CD8-positive, alpha-beta T cell (primary cell): ENCODE measurements at regions of chr16 and their contacts with region 1.

Region 1: GRCh38 chr16:2223375-2224182 is at the start of gene E4F1:
- DNase-seq: peak; percentile 97 to 100 (median 99)
- ATAC-seq: peak; percentile 96
- H3K4me3 ChIP-seq: peak within 1 kb of the TSS; percentile 81 to 88
- H3K4me3 Mint-ChIP-seq: peak within 1 kb of the TSS; percentile 94
- H3K27ac ChIP-seq: peak within 1 kb of the TSS; percentile 67 to 76
- H3K27ac Mint-ChIP-seq: peak within 1 kb of the TSS; percentile 85
- H3K4me1 ChIP-seq: peaks cover 13% of the 10 kb centered on the region
- H3K4me1 Mint-ChIP-seq: peaks cover 22% of the 10 kb centered on the region
- H3K27me3 ChIP-seq: no peaks in the 10 kb centered on the region
- H3K27me3 Mint-ChIP-seq: no peaks in the 10 kb centered on the region
- CTCF ChIP-seq: no peak
- total RNA-seq, gene E4F1: 36.3 to 37.5 TPM

Region 2: DNA sequence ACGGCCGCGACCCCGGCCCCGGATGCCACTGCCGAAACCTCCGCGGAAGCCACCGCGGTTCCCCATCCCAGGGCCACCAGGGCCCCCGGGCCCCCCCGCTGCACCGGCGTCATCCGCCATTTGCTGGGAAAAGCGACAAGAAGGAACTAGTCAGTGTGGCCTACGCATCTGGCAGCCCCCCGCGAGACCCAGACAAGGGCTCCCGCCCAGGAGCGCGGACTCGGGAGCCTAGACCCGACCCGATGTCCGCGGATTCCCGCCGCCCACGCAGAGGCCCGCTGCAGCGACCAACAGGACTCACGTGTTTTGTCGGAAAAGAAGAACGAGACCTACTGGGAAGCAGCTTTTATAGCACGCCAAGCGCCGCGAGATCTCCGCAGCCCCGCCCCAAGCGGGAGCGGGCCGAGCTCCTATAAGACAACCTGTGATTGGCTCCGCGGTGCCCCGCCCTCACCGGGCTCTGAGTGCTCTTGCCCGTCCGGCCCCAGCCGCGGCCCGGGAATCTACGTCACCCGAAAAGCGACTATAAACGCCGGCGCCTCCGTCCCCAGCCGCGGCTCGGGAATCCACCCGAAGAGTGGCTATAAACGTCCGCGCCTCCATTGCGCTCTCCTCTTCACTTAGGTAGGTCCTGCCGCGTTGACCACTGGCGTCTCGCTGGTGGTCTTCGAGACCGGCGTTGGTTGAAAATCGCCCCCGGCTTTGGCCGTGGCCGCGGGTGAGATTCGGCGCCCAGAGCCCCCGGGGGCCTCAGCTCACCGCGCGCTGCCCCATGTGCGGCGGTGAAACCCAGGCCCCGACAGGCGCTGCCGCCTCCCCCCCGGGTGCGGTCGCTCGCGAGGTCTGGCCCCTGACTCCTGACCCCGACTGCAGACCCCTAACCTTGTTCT is 258.8 kb before region 1 on chr16 and contains the start of gene RPS2:
- CTCF ChIA-PET with region 1: no interaction called
- POLR2A ChIA-PET with region 1: no interaction called
- intact Hi-C with region 1: loop called in 1 of 2 experiments (anchors 1 kb)
- DNase-seq: peak; percentile 92 to 99 (median 98)
- ATAC-seq: peak; percentile 89
- H3K4me3 ChIP-seq: peak within 1 kb of the TSS; percentile 82 to 99
- H3K4me3 Mint-ChIP-seq: peak within 1 kb of the TSS; percentile 94
- H3K27ac ChIP-seq: peak within 1 kb of the TSS; percentile 98 to 99
- H3K27ac Mint-ChIP-seq: peak within 1 kb of the TSS; percentile 96
- H3K4me1 ChIP-seq: peaks cover 41% of the 10 kb centered on the region
- H3K4me1 Mint-ChIP-seq: peaks cover 45% of the 10 kb centered on the region
- H3K27me3 ChIP-seq: no peaks in the 10 kb centered on the region
- H3K27me3 Mint-ChIP-seq: no peaks in the 10 kb centered on the region
- CTCF ChIP-seq: no peak
- total RNA-seq, gene RPS2: 4,060 to 4,094 TPM

Region 3: GRCh38 chr16:2500918-2501750 is 277.6 kb after region 1 on chr16:
- CTCF ChIA-PET with region 1: no interaction called
- POLR2A ChIA-PET with region 1: no interaction called
- intact Hi-C with region 1: no loop called
- DNase-seq: peak; percentile 67 to 89 (median 80)
- ATAC-seq: peak; percentile 100
- H3K4me3 ChIP-seq: no peak overlapping the region
- H3K4me3 Mint-ChIP-seq: no peak overlapping the region
- H3K27ac ChIP-seq: no peak overlapping the region
- H3K27ac Mint-ChIP-seq: no peak overlapping the region
- H3K4me1 ChIP-seq: peaks cover 6% of the 10 kb centered on the region
- H3K4me1 Mint-ChIP-seq: peaks cover 2% of the 10 kb centered on the region
- H3K27me3 ChIP-seq: no peaks in the 10 kb centered on the region
- H3K27me3 Mint-ChIP-seq: no peaks in the 10 kb centered on the region
- CTCF ChIP-seq: peak; percentile 87

Region 4: DNA sequence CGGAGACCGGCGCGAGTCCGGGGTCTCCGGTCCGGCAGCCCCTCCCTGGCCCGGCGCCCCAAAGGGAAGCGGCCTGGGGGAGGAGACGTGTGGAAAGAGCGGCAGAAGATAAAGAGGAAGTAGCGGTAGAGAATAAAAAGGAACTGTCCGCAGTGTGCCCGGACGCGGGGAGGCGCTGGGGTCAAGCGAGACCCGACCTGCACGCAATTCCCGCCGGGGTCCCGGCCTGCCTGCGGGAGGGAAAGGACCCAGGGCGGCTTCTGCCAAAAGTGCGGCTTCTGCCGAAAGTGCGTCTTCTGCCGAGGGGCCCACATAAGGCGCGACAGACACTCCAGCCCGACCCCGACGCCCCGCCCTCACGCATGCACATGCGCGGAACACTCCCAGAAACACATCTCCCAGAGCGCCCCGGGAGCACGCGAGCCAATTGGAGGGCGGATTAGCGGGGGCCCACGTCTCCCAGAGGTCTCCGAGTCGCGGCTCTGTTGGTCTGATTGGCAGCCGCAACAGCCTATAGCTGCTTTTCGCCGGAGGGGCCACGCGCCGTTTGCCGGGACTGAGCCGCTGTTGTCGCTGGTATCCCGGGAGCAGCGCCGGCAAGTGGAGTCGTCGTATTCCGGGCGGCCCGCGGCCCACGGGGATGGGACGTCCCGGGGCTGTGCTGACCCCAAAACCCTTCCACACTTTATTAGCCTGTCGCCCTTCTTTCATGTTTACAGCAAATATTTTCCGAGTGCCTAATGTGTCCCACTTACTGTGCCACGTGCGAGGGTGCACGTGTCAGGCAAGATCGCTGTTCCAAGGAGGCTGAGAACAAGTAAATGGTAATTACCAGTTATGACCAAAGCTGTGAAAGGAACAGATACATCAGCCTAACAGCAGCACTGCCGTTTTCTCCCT is 1040.8 kb after region 1 on chr16:
- CTCF ChIA-PET with region 1: no interaction called
- POLR2A ChIA-PET with region 1: no interaction called
- intact Hi-C with region 1: no loop called
- DNase-seq: peak; percentile 95 to 99 (median 97)
- ATAC-seq: peak; percentile 88
- H3K4me3 ChIP-seq: peak overlapping the region; percentile 82 to 91
- H3K4me3 Mint-ChIP-seq: peak overlapping the region; percentile 82
- H3K27ac ChIP-seq: peak overlapping the region; percentile 96 to 98
- H3K27ac Mint-ChIP-seq: peak overlapping the region; percentile 94
- H3K4me1 ChIP-seq: peaks cover 19% of the 10 kb centered on the region
- H3K4me1 Mint-ChIP-seq: peaks cover 43% of the 10 kb centered on the region
- H3K27me3 ChIP-seq: no peaks in the 10 kb centered on the region
- H3K27me3 Mint-ChIP-seq: no peaks in the 10 kb centered on the region
- CTCF ChIP-seq: no peak